Right cardiac atrium (tissue), 5 donors: ENCODE measurements at regions of chr11 and their contacts with region 1.

Region 1: DNA sequence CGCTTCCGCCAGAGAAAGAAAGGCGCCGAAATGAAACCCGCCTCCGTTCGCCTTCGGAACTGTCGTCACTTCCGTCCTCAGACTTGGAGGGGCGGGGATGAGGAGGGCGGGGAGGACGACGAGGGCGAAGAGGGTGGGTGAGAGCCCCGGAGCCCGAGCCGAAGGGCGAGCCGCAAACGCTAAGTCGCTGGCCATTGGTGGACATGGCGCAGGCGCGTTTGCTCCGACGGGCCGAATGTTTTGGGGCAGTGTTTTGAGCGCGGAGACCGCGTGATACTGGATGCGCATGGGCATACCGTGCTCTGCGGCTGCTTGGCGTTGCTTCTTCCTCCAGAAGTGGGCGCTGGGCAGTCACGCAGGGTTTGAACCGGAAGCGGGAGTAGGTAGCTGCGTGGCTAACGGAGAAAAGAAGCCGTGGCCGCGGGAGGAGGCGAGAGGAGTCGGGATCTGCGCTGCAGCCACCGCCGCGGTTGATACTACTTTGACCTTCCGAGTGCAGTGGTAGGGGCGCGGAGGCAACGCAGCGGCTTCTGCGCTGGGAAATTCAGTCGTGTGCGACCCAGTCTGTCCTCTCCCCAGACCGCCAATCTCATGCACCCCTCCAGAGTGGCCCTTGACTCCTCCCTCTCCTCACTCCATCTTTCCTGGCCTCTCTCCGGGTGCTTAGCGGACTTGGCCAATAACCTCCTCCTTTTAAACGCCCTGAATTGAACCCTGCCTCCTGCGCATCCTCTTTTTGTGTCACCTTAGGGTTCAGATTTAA is at the start of gene ATM:
- DNase-seq: peak; percentile 100
- ATAC-seq: peak; percentile 98 to 99
- H3K4me3 ChIP-seq: peak within 1 kb of the TSS; percentile 82
- H3K27ac ChIP-seq: peak within 1 kb of the TSS; percentile 98
- H3K4me1 ChIP-seq: no peaks in the 10 kb centered on the region
- H3K27me3 ChIP-seq: no peaks in the 10 kb centered on the region
- total RNA-seq, gene ATM: 39.7 to 46.5 (median 45.3) TPM

Region 2: GRCh38 chr11:108008656-108009496 is 214.0 kb before region 1 on chr11 and contains the start of gene CUL5:
- intact Hi-C with region 1: loop called in 2 of 4 experiments (anchors 5 kb)
- DNase-seq: peak; percentile 95 to 98 (median 97)
- ATAC-seq: peak; percentile 98
- H3K4me3 ChIP-seq: peak within 1 kb of the TSS; percentile 91
- H3K27ac ChIP-seq: peak within 1 kb of the TSS; percentile 95
- H3K4me1 ChIP-seq: no peaks in the 10 kb centered on the region
- H3K27me3 ChIP-seq: no peaks in the 10 kb centered on the region
- total RNA-seq, gene CUL5: 35.1 to 38.6 (median 37.8) TPM

Region 3: DNA sequence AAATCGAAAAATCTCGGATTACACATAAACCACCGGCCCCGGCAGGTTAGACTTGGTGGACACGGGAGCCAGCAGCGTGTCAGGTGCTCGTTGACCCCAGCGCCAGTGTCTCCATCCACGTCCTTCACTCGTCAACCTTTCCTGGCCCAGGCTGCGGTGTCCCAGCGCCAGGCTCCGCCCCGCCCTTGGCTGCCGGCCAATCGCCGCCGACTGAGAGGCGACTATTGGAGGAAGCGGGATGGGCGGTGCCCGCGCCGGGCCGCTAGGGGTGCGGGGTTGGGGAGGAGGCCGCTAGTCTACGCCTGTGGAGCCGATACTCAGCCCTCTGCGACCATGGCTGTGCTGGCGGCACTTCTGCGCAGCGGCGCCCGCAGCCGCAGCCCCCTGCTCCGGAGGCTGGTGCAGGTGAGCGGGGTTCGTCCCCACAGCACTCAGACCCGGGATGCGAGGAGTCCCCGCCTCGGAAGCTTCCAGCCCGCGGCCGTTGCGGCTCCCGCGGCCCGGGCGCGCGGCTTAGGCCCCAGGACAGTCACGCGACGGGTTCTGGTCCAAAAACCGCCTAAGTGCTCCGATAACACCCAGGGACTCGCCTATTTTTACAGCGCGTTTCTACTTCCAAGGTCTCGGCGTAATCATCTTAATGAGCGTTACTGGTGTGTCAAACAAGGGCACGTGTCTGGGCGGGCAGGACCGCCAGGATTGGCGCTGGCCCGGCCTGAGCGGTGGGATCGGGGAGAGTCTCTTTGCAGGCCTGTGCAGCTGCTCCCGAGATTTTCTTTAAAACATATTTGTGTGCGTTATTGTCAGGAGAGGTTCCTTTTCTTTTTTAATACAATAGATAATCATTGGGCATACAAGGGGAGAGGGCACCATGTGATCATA is 101.4 kb before region 1 on chr11 and contains the start of gene ACAT1:
- intact Hi-C with region 1: loop called in 1 of 4 experiments (anchors 10 kb)
- DNase-seq: peak; percentile 98 to 100 (median 99)
- ATAC-seq: peak; percentile 97 to 98
- H3K4me3 ChIP-seq: peak within 1 kb of the TSS; percentile 54
- H3K27ac ChIP-seq: peak within 1 kb of the TSS; percentile 87
- H3K4me1 ChIP-seq: peaks cover 12% of the 10 kb centered on the region
- H3K27me3 ChIP-seq: no peaks in the 10 kb centered on the region
- total RNA-seq, gene ACAT1: 128 to 198 (median 164) TPM

Region 4: DNA sequence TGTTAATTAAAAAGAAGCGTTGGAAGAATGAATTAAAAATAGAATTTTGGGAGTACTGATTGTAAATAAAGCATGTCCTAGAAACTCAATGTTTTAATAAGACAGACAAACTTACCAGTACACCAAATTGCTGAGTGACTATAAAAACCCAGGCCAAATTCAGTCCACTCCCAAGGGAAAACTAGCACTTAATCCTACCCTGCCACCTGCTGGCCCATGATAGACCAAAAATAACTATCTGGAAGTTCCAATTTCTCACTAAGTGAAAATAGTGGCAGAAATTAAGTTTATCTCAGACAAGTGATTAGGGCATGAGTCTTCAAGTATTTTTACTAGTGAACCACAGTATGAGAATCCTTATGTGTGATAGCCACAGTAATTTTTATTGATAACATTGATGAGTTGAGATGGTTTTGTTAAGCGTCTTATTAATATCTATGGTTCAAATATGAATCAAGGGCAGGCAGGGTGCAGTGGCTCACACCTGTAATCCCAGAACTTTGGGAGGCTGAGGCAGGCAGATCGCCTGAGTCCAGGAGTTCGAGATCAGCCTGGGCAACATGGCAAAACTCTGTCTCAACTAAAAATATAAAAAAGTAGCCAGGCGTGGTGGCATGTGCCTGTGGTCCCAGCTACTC is 432.2 kb after region 1 on chr11:
- intact Hi-C with region 1: loop called in 1 of 4 experiments (anchors 5 kb)
- DNase-seq: peak in 1 of 3 donors; percentile 52
- ATAC-seq: peak in 1 of 2 donors; percentile 51
- H3K4me3 ChIP-seq: no peak overlapping the region
- H3K27ac ChIP-seq: no peak overlapping the region
- H3K4me1 ChIP-seq: no peaks in the 10 kb centered on the region
- H3K27me3 ChIP-seq: no peaks in the 10 kb centered on the region